PC-3 (cell line): ENCODE measurements at regions of chr15 and their contacts with region 1.

Region 1: DNA sequence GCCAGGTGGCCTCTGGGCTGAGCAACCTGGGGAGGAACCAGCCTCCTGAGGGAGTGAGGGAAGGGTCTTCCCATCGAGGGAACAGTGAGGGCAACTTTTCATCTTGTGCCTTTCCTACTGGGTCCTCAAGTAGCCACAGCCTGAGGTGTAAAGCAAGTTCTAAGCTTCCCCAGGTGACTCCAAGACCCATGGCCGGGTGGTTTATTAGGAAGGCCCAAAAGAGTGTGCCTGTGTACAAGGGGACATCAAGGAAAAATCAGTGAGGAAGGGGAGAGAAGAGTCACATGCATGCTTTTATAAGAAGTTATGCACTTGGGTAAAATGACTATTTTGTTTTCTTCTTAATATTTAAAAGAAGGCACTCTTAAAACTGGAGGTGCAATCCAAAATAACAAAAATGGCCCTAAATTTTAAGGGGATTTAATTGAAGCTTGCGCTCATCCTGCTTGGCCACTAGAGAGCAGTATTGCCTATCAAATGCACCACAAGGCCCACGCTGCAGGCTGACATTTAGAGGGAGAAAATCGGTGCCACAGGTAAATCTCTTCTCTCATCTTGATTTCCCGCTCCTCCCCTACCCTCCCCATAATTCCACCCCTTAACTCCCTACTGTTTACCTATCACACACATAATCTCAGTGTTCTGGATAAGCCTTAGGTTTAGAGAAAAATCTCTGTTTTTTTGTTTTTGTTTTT is 6.7 kb downstream of the NANOGP8 start:
- DNase-seq: peak; percentile 71
- ATAC-seq: peak; percentile 84
- H3K4me3 ChIP-seq: no peak overlapping the region
- H3K27ac ChIP-seq: no peak overlapping the region
- H3K4me1 ChIP-seq: no peaks in the 10 kb centered on the region
- H3K27me3 ChIP-seq: no peaks in the 10 kb centered on the region
- CTCF ChIP-seq: peak; percentile 91

Region 2: DNA sequence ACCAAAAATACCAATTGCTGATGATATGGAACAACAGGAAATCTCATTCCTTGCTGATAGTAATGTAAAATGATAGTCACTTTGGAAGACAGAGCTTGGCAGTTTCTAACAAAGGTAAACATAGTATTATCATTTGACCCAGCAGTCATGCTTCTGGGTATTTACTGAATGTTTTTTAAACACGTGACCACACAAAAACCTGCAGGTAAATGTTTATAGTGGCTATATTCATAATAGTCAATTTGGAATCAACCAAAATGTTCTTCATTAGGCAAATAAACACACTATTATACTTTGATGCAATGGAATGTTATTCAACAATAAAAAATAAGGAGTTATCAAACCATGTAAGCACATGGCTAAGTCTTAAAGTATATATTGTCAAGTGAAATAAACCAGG is 616.6 kb before region 1 on chr15:
- CTCF ChIA-PET with region 1: no interaction called
- POLR2A ChIA-PET with region 1: no interaction called
- intact Hi-C with region 1: no loop called
- DNase-seq: no peak
- ATAC-seq: no peak
- H3K4me3 ChIP-seq: no peak overlapping the region
- H3K27ac ChIP-seq: no peak overlapping the region
- H3K4me1 ChIP-seq: no peaks in the 10 kb centered on the region
- H3K27me3 ChIP-seq: peaks cover 43% of the 10 kb centered on the region
- CTCF ChIP-seq: no peak

Region 3: GRCh38 chr15:35141743-35142471 is 63.5 kb after region 1 on chr15:
- CTCF ChIA-PET with region 1: no interaction called
- POLR2A ChIA-PET with region 1: no interaction called
- intact Hi-C with region 1: no loop called
- DNase-seq: peak; percentile 72
- ATAC-seq: peak; percentile 86
- H3K4me3 ChIP-seq: no peak overlapping the region
- H3K27ac ChIP-seq: no peak overlapping the region
- H3K4me1 ChIP-seq: peaks cover 11% of the 10 kb centered on the region
- H3K27me3 ChIP-seq: no peaks in the 10 kb centered on the region
- CTCF ChIP-seq: no peak

Region 4: GRCh38 chr15:35206060-35206675 is 127.8 kb after region 1 on chr15:
- CTCF ChIA-PET with region 1: no interaction called
- POLR2A ChIA-PET with region 1: no interaction called
- intact Hi-C with region 1: loop called (anchors 1 kb)
- DNase-seq: peak; percentile 74
- ATAC-seq: peak; percentile 70
- H3K4me3 ChIP-seq: no peak overlapping the region
- H3K27ac ChIP-seq: no peak overlapping the region
- H3K4me1 ChIP-seq: no peaks in the 10 kb centered on the region
- H3K27me3 ChIP-seq: no peaks in the 10 kb centered on the region
- CTCF ChIP-seq: peak; percentile 84

Region 5: GRCh38 chr15:35281515-35281914 is 203.1 kb after region 1 on chr15:
- CTCF ChIA-PET with region 1: interaction called, 3 read pairs
- POLR2A ChIA-PET with region 1: no interaction called
- intact Hi-C with region 1: loop called (anchors 2 kb)
- DNase-seq: peak; percentile 87
- ATAC-seq: peak; percentile 99
- H3K4me3 ChIP-seq: no peak overlapping the region
- H3K27ac ChIP-seq: peak overlapping the region; percentile 21; the same call in 1 of the 2 replicates
- H3K4me1 ChIP-seq: peaks cover 15% of the 10 kb centered on the region
- H3K27me3 ChIP-seq: no peaks in the 10 kb centered on the region
- CTCF ChIP-seq: no peak

Region 6: DNA sequence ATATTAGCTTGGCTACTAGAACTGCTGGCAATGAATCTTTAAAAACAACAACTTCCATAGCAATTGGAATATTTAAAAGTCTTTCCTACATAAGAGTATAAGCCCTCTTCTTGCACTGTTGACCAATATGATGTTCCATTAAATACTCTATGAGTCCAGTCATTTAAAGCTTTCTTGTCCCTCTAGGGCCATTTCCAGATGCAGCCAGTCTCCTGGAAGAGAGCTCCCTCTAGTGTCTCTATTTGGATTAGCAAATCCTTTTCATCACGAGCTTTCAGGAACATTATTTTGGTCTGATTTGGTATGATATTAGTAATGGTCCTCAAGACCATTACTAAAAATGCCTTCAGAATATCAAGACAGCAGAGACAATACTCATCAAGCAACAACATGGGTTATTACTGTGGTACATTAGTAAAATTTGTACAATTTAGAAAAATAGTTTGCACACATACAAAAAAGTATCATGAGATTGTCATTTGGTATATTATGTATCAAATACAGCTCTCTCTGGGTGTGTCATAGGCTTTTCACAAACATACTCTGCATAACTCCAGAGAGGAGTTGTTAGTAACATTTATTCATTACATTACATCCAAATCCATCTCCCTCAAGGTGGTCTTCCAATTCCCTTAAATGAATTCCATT is 366.3 kb after region 1 on chr15:
- CTCF ChIA-PET with region 1: interaction called, 6 read pairs
- POLR2A ChIA-PET with region 1: no interaction called
- intact Hi-C with region 1: loop called (anchors 1 kb)
- DNase-seq: peak; percentile 76
- ATAC-seq: peak; percentile 14
- H3K4me3 ChIP-seq: no peak overlapping the region
- H3K27ac ChIP-seq: no peak overlapping the region
- H3K4me1 ChIP-seq: peaks cover 31% of the 10 kb centered on the region
- H3K27me3 ChIP-seq: no peaks in the 10 kb centered on the region
- CTCF ChIP-seq: peak; percentile 93

Region 7: DNA sequence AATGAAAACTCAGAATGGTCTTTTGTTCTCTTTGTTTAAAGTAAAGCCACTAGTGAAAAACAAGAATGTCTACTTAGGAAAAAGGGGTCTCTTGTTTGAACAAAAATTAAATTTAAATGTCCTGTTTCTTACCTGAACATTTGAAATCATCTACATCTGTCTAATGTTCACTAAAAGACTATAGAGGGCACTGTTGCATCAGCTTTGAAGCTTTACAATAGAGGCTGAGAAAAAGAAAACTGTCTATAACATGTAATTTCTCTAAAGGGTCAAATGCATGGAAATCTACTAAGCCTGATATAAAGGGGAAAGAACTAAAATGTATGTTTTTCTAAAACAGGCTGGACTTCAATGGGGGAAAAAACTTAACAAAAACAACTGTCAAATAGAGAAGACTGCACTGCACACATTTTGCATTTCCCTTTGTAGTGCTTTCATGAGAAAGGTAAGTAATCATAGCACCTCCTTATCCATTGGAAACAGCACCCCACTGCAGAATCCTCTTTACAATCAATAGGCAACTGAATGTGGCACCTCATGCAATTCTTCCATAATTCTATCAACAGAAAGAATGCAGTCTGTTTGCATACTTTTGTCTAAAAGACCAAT is 441.3 kb after region 1 on chr15:
- CTCF ChIA-PET with region 1: no interaction called
- POLR2A ChIA-PET with region 1: no interaction called
- intact Hi-C with region 1: loop called (anchors 5 kb)
- DNase-seq: peak; percentile 69
- ATAC-seq: peak; percentile 81
- H3K4me3 ChIP-seq: no peak overlapping the region
- H3K27ac ChIP-seq: no peak overlapping the region
- H3K4me1 ChIP-seq: no peaks in the 10 kb centered on the region
- H3K27me3 ChIP-seq: no peaks in the 10 kb centered on the region
- CTCF ChIP-seq: peak; percentile 89